ENCODE measurements at regions of chr17 and their contacts with region 1.

Region 1: GRCh38 chr17:2828397-2829038 is 32.3 kb downstream of the RAP1GAP2 start:
- DNase-seq: peak; percentile 48 to 85 (median 65)
- ATAC-seq: peak; percentile 92
- H3K4me3 ChIP-seq: peak overlapping the region; percentile 40
- H3K4me3 Mint-ChIP-seq: peak overlapping the region in 9 of 10 donors; percentile 30 to 82 (median 56)
- H3K27ac ChIP-seq: no peak overlapping the region
- H3K27ac Mint-ChIP-seq: peak overlapping the region in 3 of 9 donors; percentile 34 to 76 (median 68)
- H3K4me1 ChIP-seq: peaks cover 8% of the 10 kb centered on the region in 2 donors
- H3K4me1 Mint-ChIP-seq: peaks cover 23 to 34% (median 29%) of the 10 kb centered on the region in 7 donors
- H3K27me3 ChIP-seq: no peaks in the 10 kb centered on the region
- H3K27me3 Mint-ChIP-seq: peaks cover 0 to 13% (median 1%) of the 10 kb centered on the region in 5 donors

Region 2: GRCh38 chr17:3012926-3013581 is 184.5 kb after region 1 on chr17:
- CTCF ChIA-PET with region 1: interaction called, 4 read pairs
- POLR2A ChIA-PET with region 1: no interaction called
- intact Hi-C with region 1: loop called (anchors 1 kb)
- DNase-seq: peak; percentile 38 to 62 (median 53)
- ATAC-seq: peak; percentile 82
- H3K4me3 ChIP-seq: no peak overlapping the region
- H3K4me3 Mint-ChIP-seq: no peak overlapping the region
- H3K27ac ChIP-seq: no peak overlapping the region
- H3K27ac Mint-ChIP-seq: no peak overlapping the region
- H3K4me1 ChIP-seq: no peaks in the 10 kb centered on the region
- H3K4me1 Mint-ChIP-seq: peaks cover 0 to 3% (median 0%) of the 10 kb centered on the region in 7 donors
- H3K27me3 ChIP-seq: no peaks in the 10 kb centered on the region
- H3K27me3 Mint-ChIP-seq: no peaks in the 10 kb centered on the region